ENCODE measurements at regions of chr5 and their contacts with region 1.

Region 1: DNA sequence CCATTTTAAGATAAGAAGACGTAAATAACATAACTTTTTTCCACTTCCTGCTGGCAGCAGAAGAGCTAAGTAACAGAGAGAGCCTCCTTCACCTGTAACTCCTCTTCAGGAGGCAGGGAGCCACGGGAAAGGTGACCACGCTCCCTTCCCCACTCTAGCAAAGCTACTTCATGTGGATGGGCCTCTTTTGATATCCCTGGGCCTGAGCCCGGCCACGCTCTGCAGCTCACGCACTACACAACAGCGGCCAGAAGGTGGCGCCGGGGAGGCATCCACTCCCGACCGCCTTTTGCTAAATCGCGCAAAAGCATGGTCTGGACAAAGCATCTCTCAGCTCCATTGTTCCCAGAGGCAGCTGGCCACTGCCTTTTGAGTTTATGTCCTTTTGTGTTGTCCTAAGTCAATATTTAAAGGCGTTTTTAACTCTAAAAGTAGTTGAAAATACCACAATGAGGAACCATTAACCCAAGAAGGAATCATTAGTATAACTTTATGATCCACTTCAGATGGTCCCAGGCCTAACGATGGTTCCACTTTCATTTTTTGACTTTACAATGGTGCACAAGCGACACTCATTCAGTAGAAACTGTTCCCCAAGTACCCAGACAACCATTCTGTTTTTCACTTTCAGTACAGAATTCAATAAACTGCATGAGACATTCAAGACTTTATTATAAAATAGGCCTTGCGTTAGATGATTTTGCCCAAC is 23.6 kb downstream of the CMBL start:
- DNase-seq: peak; percentile 89
- ATAC-seq: peak; percentile 99
- H3K4me3 Mint-ChIP-seq: no peak overlapping the region
- H3K27ac Mint-ChIP-seq: no peak overlapping the region
- H3K4me1 Mint-ChIP-seq: peaks cover 13% of the 10 kb centered on the region
- H3K27me3 Mint-ChIP-seq: peaks cover 1% of the 10 kb centered on the region
- CTCF ChIP-seq: peak; percentile 94

Region 2: GRCh38 chr5:10240925-10241324 is 43.2 kb before region 1 on chr5:
- CTCF ChIA-PET with region 1: no interaction called
- POLR2A ChIA-PET with region 1: no interaction called
- intact Hi-C with region 1: no loop called
- DNase-seq: no peak
- ATAC-seq: no peak
- H3K4me3 Mint-ChIP-seq: no peak overlapping the region
- H3K27ac Mint-ChIP-seq: no peak overlapping the region
- H3K4me1 Mint-ChIP-seq: peaks cover 11% of the 10 kb centered on the region
- H3K27me3 Mint-ChIP-seq: no peaks in the 10 kb centered on the region
- CTCF ChIP-seq: no peak

Region 3: GRCh38 chr5:10304932-10305331 is 20.9 kb after region 1 on chr5:
- CTCF ChIA-PET with region 1: interaction called, 10 read pairs
- POLR2A ChIA-PET with region 1: no interaction called
- intact Hi-C with region 1: no loop called
- DNase-seq: no peak
- ATAC-seq: no peak
- H3K4me3 Mint-ChIP-seq: no peak overlapping the region
- H3K27ac Mint-ChIP-seq: no peak overlapping the region
- H3K4me1 Mint-ChIP-seq: peaks cover 4% of the 10 kb centered on the region
- H3K27me3 Mint-ChIP-seq: peaks cover 24% of the 10 kb centered on the region
- CTCF ChIP-seq: no peak

Region 4: DNA sequence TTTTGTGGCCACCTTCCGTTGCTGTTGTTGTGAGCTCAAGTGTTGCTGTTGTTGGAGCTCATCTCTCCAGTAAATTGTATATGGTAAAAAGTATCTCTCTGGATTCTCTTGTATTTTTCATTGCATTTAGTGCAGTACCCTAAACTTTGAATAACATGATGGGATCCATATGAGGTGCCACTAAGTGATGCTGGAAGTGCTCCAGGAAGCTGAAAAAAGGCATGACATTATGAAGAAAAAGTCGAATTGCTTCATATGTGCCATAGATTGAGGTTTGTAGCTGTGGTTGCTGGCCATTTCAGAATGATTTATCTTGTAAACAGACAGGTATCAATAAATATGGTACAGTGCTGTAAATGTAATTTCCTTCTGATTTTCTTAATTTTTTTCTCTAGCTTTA is 74.9 kb after region 1 on chr5:
- CTCF ChIA-PET with region 1: interaction called, 32 read pairs
- POLR2A ChIA-PET with region 1: no interaction called
- intact Hi-C with region 1: loop called (anchors 10 kb)
- DNase-seq: no peak
- ATAC-seq: no peak
- H3K4me3 Mint-ChIP-seq: no peak overlapping the region
- H3K27ac Mint-ChIP-seq: no peak overlapping the region
- H3K4me1 Mint-ChIP-seq: peaks cover 62% of the 10 kb centered on the region
- H3K27me3 Mint-ChIP-seq: no peaks in the 10 kb centered on the region
- CTCF ChIP-seq: no peak

Region 5: GRCh38 chr5:10424124-10424731 is 140.1 kb after region 1 on chr5:
- CTCF ChIA-PET with region 1: interaction called, 26 read pairs
- POLR2A ChIA-PET with region 1: no interaction called
- intact Hi-C with region 1: loop called (anchors 2 kb)
- DNase-seq: peak; percentile 36
- ATAC-seq: peak; percentile 75
- H3K4me3 Mint-ChIP-seq: no peak overlapping the region
- H3K27ac Mint-ChIP-seq: no peak overlapping the region
- H3K4me1 Mint-ChIP-seq: peaks cover 33% of the 10 kb centered on the region
- H3K27me3 Mint-ChIP-seq: no peaks in the 10 kb centered on the region
- CTCF ChIP-seq: no peak